Lower leg skin (tissue), 4 donors: ENCODE measurements at regions of chr5 and their contacts with region 1.

Region 1: DNA sequence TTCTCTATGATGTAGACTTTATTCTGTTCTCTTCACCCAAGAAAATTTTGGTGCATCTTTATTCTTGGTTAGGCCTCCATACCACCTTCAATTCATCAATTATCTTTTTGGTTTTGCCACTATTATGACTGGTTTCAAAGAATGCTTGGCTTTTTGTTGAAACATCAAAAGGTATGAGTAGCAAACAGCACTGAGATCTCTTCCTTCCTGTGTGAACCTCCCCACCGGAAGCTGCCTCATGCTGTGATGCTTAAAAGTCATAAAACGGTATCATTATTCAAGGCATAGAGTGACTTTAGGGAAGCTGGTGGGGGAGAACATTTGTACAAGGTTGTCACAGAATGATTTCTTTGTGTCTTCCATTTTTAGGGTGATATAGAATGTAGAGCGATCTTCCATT is 70.6 kb downstream of the IQGAP2 start:
- DNase-seq: no peak
- H3K4me3 ChIP-seq: no peak overlapping the region
- CTCF ChIP-seq: no peak
- POLR2A ChIP-seq: no peak

Region 2: DNA sequence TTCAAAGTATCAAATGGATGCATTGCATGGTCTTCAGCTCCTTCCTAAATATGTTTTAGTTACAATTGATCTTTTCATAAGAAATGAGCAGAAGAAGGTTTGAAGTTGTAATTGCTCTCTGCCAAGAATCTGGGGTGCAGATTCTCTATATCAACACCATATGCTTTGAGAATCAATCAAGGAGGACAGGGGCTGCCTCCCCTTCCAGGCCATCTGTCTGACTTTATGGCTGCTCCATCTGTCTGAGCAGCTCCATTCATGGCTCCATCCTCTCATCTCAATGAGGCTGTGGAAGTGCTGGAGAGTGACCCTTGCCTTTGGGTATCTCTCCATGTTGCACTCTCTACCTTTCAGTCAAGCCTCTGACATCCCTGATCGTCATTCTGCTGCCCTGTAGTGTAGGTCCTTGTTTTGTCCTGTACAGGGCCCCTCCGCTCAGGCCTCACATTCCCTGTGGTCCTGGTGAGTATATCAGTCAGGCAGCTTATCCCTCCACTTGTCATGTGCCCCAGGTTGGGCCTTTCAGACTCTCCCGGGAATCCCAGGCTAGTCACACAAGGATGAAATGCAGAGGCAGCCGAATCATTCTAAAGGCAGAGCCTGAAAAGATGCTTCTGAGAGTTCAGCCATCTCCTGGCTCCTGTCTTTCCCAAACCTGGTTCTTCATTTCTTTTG is 404.5 kb before region 1 on chr5:
- intact Hi-C with region 1: loop called (anchors 5 kb)
- DNase-seq: no peak
- H3K4me3 ChIP-seq: no peak overlapping the region
- CTCF ChIP-seq: no peak
- POLR2A ChIP-seq: no peak